Transverse colon (tissue), 4 donors: ENCODE measurements at regions of chr17 and their contacts with region 1.

Region 1: DNA sequence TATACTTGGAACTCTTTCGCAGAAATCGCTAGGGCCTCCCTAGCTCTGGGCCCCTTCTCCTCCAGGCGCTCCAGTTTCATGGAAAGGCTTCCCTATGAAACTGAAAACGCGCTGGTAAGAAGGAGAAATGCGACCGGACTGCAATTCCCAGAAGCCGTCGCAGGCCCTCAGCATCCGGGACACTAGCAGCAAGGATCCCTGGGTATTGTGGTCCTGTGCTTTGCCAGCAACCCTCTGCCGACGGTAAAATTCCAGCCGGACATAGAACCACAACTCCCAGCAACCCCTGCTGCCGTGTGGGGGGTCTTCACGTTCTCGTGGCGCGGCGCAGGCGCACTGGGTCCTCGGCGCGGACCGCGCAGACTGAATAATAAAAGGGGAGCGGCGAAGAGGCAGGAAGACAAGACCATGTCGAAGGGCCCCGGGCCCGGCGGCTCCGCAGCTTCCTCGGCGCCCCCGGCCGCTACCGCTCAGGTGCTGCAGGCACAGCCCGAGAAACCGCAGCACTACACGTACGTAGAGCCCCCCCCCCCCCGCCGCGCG is at the start of gene UNK:
- DNase-seq: peak; percentile 98
- H3K4me3 ChIP-seq: peak within 1 kb of the TSS; percentile 67 to 84 (median 74)
- H3K27ac ChIP-seq: peak within 1 kb of the TSS; percentile 95 to 100 (median 98)
- H3K4me1 ChIP-seq: peaks cover 25 to 52% (median 31%) of the 10 kb centered on the region in 4 donors
- H3K27me3 ChIP-seq: no peaks in the 10 kb centered on the region
- CTCF ChIP-seq: peak in 2 of 5 experiments; percentile 2 to 10
- EP300 ChIP-seq: no peak
- POLR2A ChIP-seq: peak; percentile 69
- total RNA-seq, gene UNK: 24.0 to 99.1 (median 63.1) TPM

Region 2: GRCh38 chr17:75855310-75856081 is 71.0 kb after region 1 on chr17 and contains the start of gene WBP2:
- in situ Hi-C with region 1: no loop called
- intact Hi-C with region 1: loop called (anchors 10 kb)
- DNase-seq: peak; percentile 98
- H3K4me3 ChIP-seq: peak within 1 kb of the TSS; percentile 69 to 99 (median 87)
- H3K27ac ChIP-seq: peak within 1 kb of the TSS; percentile 94 to 100 (median 96)
- H3K4me1 ChIP-seq: peaks cover 12 to 43% (median 22%) of the 10 kb centered on the region in 4 donors
- H3K27me3 ChIP-seq: no peaks in the 10 kb centered on the region
- CTCF ChIP-seq: peak in 4 of 5 experiments; percentile 23 to 50 (median 37)
- EP300 ChIP-seq: no peak
- POLR2A ChIP-seq: peak; percentile 99
- total RNA-seq, gene WBP2: 27.7 to 75.1 (median 56.8) TPM

Region 3: DNA sequence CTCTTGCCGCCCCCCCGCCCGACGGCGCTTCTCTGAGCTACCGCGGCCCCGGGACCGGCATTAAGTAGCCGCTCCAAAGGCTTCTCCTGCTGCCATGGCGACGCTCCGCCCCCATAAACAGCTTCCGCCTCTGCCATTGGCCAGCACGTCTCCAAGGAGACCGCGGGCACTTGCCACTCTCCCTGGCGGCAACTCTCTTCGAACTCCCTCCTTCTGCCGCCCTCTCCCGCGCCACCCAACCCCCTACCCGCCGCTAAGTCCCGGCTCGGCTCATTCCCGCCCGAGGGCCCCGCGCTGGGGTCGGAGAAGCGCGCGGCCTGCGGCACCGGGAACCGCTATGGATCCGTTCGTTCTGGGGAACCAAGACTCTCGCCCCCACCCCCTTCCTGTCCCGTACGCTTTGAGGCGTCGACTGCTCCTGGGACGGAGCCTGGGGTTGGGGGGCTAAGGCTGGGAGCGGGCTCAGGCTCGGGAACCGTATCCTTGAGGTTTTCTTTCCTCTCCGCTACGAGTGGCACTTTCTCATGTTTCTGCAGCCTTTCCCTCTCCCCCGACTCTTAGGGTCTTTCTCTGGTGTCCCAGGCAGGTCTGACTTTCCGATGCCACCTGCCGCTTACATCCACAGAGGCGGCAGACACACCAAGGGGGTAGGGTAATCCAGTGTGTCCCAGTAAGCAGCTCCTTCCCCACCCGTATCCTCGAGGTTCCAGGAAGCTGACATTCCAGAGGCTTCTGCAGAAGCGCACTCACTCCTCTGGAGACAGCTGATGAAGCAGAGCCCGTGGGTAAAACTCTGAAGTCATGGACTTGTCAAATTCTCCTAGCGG is 356.9 kb after region 1 on chr17 and contains the start of gene FOXJ1:
- in situ Hi-C with region 1: no loop called
- intact Hi-C with region 1: no loop called
- DNase-seq: peak; percentile 93
- H3K4me3 ChIP-seq: peak within 1 kb of the TSS; percentile 26 to 54 (median 46)
- H3K27ac ChIP-seq: peak within 1 kb of the TSS in 2 of 4 donors; percentile 6 to 20
- H3K4me1 ChIP-seq: peaks cover 0 to 26% (median 21%) of the 10 kb centered on the region in 4 donors
- H3K27me3 ChIP-seq: peaks cover 46% of the 10 kb centered on the region
- CTCF ChIP-seq: no peak
- EP300 ChIP-seq: no peak
- POLR2A ChIP-seq: no peak
- total RNA-seq, gene FOXJ1: 0.82 to 7.4 (median 1.9) TPM in 3 of 4 donors, not detected in the other

Region 4: DNA sequence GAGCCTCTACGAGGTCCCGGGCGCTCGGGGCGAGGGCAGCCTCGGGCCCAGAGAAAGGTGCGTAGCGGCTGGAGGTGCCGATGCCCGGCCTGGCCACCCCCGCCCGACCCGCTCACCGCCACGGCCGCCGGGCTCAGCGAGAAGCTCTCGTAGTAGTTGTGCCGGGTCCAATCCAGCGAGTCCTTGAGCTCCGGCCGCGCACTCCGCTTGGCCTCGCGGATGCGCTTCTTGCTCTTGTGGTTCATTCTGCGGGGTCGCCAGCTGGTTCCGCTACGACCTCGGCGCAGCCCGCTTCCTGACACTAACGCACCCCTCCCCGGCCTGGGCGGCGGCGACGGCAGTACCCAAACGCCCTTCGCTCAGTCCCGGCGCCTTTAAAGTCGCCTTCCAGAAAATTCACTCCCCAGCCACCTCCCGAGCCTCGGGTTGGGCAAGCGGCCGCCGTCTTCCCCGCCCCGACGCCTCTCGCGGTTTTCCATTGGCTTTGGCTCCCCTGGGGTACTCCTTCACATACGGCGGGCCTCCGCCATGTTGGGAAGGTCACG is 941.8 kb after region 1 on chr17 and contains the start of gene JMJD6:
- in situ Hi-C with region 1: no loop called
- intact Hi-C with region 1: loop called (anchors 10 kb)
- DNase-seq: peak; percentile 98
- H3K4me3 ChIP-seq: peak within 1 kb of the TSS; percentile 89 to 99 (median 98)
- H3K27ac ChIP-seq: peak within 1 kb of the TSS; percentile 100
- H3K4me1 ChIP-seq: peaks cover 21 to 65% (median 36%) of the 10 kb centered on the region in 4 donors
- H3K27me3 ChIP-seq: no peaks in the 10 kb centered on the region
- CTCF ChIP-seq: no peak
- EP300 ChIP-seq: no peak
- POLR2A ChIP-seq: peak; percentile 98
- total RNA-seq, gene JMJD6: 25.4 to 58.4 (median 26.9) TPM